ENCODE measurements at regions of chr18 and their contacts with region 1.

Region 1: GRCh38 chr18:73842795-73843394 is 304.7 kb downstream of the FBXO15 start:
- DNase-seq: peak in 12 of 14 experiments; percentile 3 to 57 (median 18)
- ATAC-seq: no peak
- H3K4me3 ChIP-seq: no peak overlapping the region
- H3K4me3 Mint-ChIP-seq: peak overlapping the region; percentile 67
- H3K27ac ChIP-seq: no peak overlapping the region
- H3K27ac Mint-ChIP-seq: no peak overlapping the region
- H3K4me1 ChIP-seq: no peaks in the 10 kb centered on the region
- H3K4me1 Mint-ChIP-seq: peaks cover 11% of the 10 kb centered on the region
- H3K27me3 ChIP-seq: peaks cover 0 to 9% of the 10 kb centered on the region in 2 experiments
- H3K27me3 Mint-ChIP-seq: peaks cover 9% of the 10 kb centered on the region
- CTCF ChIP-seq: peak; percentile 96

Region 2: DNA sequence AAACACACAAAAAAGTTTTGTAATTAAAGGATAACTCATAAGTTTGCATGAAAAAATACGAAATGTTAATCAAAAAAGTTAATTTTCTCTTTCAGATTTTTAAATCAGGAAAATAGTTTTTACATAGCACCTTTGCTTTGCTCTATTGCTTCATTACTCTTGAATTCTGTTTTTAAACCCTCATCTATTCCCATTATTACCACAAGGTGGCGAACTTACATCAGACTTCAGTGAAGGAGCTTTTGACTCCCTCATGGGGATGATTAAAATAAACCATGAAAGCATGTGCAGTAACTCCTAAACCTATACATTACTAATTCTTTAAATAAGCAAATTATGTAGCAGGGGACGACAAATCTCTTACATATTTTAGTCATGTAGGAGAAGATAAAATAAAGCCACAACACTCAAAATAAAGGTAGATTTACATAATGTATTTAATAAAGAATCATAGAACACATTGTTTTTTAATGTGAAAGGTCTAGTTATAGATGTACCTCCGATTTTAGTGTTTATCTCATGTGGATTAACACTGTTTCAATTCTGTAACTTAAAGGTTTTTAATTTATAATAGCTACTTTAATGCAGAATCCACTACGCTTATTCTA is 1080.3 kb before region 1 on chr18:
- CTCF ChIA-PET with region 1: no interaction called
- POLR2A ChIA-PET with region 1: no interaction called
- intact Hi-C with region 1: loop called in 1 of 2 experiments (anchors 10 kb)
- DNase-seq: peak in 3 of 14 experiments; percentile 6 to 38 (median 23)
- ATAC-seq: no peak
- H3K4me3 ChIP-seq: no peak overlapping the region
- H3K4me3 Mint-ChIP-seq: no peak overlapping the region
- H3K27ac ChIP-seq: no peak overlapping the region
- H3K27ac Mint-ChIP-seq: no peak overlapping the region
- H3K4me1 ChIP-seq: no peaks in the 10 kb centered on the region
- H3K4me1 Mint-ChIP-seq: no peaks in the 10 kb centered on the region
- H3K27me3 ChIP-seq: no peaks in the 10 kb centered on the region
- H3K27me3 Mint-ChIP-seq: no peaks in the 10 kb centered on the region
- CTCF ChIP-seq: peak; percentile 64

Region 3: GRCh38 chr18:73908323-73908722 is 65.4 kb after region 1 on chr18:
- CTCF ChIA-PET with region 1: no interaction called
- POLR2A ChIA-PET with region 1: no interaction called
- intact Hi-C with region 1: loop called in 1 of 2 experiments (anchors 10 kb)
- DNase-seq: no peak
- ATAC-seq: no peak
- H3K4me3 ChIP-seq: no peak overlapping the region
- H3K4me3 Mint-ChIP-seq: no peak overlapping the region
- H3K27ac ChIP-seq: no peak overlapping the region
- H3K27ac Mint-ChIP-seq: no peak overlapping the region
- H3K4me1 ChIP-seq: no peaks in the 10 kb centered on the region
- H3K4me1 Mint-ChIP-seq: no peaks in the 10 kb centered on the region
- H3K27me3 ChIP-seq: no peaks in the 10 kb centered on the region
- H3K27me3 Mint-ChIP-seq: peaks cover 17% of the 10 kb centered on the region
- CTCF ChIP-seq: no peak